ENCODE measurements at regions of chr11 and their contacts with region 1.

Region 1: GRCh38 chr11:63838678-63839507 is at the start of gene MARK2:
- DNase-seq: peak; percentile 96
- H3K4me3 ChIP-seq: peak within 1 kb of the TSS; percentile 59 to 86 (median 86)
- H3K27ac ChIP-seq: peak within 1 kb of the TSS; percentile 58
- H3K4me1 ChIP-seq: peaks cover 31% of the 10 kb centered on the region
- H3K27me3 ChIP-seq: no peaks in the 10 kb centered on the region
- CTCF ChIP-seq: no peak
- total RNA-seq, gene MARK2: 26.7 to 64.4 TPM

Region 2: GRCh38 chr11:63710476-63711217 is 128.2 kb before region 1 on chr11:
- CTCF ChIA-PET with region 1: no interaction called
- dilution Hi-C with region 1: no loop called
- in situ Hi-C with region 1: no loop called
- intact Hi-C with region 1: no loop called
- DNase-seq: no peak
- H3K4me3 ChIP-seq: no peak overlapping the region
- H3K27ac ChIP-seq: no peak overlapping the region
- H3K4me1 ChIP-seq: no peaks in the 10 kb centered on the region
- H3K27me3 ChIP-seq: no peaks in the 10 kb centered on the region
- CTCF ChIP-seq: no peak

Region 3: DNA sequence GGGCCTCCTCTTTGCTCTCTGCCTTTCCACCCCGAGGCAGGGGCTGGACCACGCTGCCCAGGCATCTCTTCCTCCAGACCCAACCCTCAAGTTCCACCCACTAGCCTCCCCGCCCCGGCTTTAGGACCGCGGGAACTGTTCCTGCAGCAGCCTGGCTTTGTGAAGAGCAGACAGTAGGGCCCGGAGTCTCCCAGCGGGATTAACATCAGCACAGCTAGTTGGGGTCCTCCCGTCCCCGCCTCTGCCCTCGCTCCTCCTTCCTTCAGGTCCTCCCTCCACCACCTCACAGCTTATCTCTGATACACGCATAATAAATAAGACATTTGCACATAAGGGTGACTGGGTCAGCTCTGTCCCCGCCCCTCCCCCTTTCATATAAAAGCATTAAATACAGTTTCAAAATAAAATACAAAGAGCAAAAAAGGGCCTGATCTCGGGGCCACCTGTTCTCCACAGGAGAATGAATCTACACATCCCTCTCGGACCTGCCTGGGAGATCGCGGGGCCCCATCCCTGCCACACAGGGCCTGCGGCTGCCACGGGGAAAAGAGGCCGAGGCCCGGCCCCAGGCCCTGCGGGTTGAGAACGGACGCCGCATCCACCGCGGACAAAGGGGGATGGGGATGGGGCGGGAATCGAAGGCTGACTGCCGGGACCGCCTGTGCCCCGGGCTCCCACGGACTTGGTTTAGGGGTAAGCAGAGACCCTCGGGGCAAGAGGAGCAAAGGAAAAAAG is 76.8 kb before region 1 on chr11:
- CTCF ChIA-PET with region 1: no interaction called
- dilution Hi-C with region 1: no loop called
- in situ Hi-C with region 1: no loop called
- intact Hi-C with region 1: no loop called
- DNase-seq: no peak
- H3K4me3 ChIP-seq: no peak overlapping the region
- H3K27ac ChIP-seq: no peak overlapping the region
- H3K4me1 ChIP-seq: peaks cover 3% of the 10 kb centered on the region
- H3K27me3 ChIP-seq: no peaks in the 10 kb centered on the region
- CTCF ChIP-seq: no peak

Region 4: GRCh38 chr11:63871962-63872799 is 33.3 kb after region 1 on chr11:
- CTCF ChIA-PET with region 1: no interaction called
- dilution Hi-C with region 1: no loop called
- in situ Hi-C with region 1: no loop called
- intact Hi-C with region 1: loop called (anchors 1 kb)
- DNase-seq: peak; percentile 93
- H3K4me3 ChIP-seq: no peak overlapping the region
- H3K27ac ChIP-seq: no peak overlapping the region
- H3K4me1 ChIP-seq: peaks cover 38% of the 10 kb centered on the region
- H3K27me3 ChIP-seq: no peaks in the 10 kb centered on the region
- CTCF ChIP-seq: peak in 1 of 2 donors; percentile 49

Region 5: GRCh38 chr11:63896071-63896470 is 57.2 kb after region 1 on chr11:
- CTCF ChIA-PET with region 1: no interaction called
- dilution Hi-C with region 1: loop called (anchors 5 kb)
- in situ Hi-C with region 1: no loop called
- intact Hi-C with region 1: loop called (anchors 2 kb)
- DNase-seq: no peak
- H3K4me3 ChIP-seq: no peak overlapping the region
- H3K27ac ChIP-seq: no peak overlapping the region
- H3K4me1 ChIP-seq: no peaks in the 10 kb centered on the region
- H3K27me3 ChIP-seq: no peaks in the 10 kb centered on the region
- CTCF ChIP-seq: no peak

Region 6: DNA sequence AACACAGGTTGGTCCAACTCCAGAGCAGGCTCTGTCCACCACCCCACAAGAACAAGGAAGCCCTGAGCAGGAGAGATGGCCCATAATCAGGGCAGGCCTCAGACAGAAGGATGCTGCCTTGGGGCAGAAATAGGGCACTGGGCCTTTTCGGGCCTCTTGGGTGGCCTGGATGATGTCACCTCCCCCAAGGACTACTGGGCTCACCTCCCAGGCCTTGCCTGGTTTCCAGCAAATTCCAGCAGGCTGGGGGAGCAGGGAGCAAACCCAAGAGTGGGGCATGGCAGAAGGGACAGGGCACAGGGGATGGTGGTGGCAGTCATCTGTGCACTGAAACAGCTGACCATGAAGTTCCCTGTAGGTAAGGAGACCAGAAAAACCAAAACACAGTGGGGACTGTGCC is 94.6 kb after region 1 on chr11:
- CTCF ChIA-PET with region 1: no interaction called
- dilution Hi-C with region 1: loop called (anchors 5 kb)
- in situ Hi-C with region 1: no loop called
- intact Hi-C with region 1: no loop called
- DNase-seq: no peak
- H3K4me3 ChIP-seq: no peak overlapping the region
- H3K27ac ChIP-seq: no peak overlapping the region
- H3K4me1 ChIP-seq: peaks cover 9% of the 10 kb centered on the region
- H3K27me3 ChIP-seq: no peaks in the 10 kb centered on the region
- CTCF ChIP-seq: no peak

Region 7: DNA sequence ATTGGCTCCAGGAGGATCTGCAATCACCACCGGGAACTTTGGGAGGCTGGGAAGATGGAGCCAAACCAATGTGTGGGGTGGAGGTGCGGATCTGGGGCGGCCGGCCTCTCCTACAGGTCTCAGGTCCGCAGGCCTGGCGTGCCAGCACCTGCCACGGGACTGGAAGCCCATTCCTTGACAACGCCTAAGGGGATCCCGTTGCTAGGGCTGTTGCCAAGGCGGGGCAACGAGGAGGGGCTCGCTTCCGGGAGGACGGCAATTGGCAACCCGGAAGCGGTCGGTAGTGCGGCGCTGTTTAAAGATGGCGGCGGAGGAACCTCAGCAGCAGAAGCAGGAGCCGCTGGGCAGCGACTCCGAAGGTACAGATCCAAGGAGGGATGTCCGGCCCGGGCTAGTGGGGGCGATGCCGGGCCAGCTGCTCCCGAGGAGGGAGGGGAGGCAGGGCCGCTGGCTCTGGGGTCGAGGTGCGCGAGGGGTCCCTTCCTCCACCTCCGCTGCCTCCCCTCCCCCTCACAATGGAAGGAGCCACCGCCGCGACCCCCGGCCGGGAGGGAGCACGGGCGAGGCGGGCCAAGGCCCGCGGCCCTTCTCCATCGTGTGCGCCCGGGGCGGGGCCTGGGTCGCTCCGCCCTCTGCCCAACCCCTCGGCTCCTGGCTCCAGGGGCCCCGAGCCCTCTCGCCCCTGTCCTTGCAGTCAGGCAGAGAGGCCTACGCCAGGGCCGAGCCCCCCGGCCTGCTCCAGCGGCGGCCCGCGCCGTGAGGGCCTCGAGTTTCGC is 147.5 kb after region 1 on chr11 and contains the start of gene OTUB1:
- CTCF ChIA-PET with region 1: no interaction called
- dilution Hi-C with region 1: no loop called
- in situ Hi-C with region 1: loop called in 1 of 2 experiments (anchors 10 kb)
- intact Hi-C with region 1: loop called (anchors 1 kb)
- DNase-seq: peak; percentile 97
- H3K4me3 ChIP-seq: peak within 1 kb of the TSS; percentile 83 to 99 (median 89)
- H3K27ac ChIP-seq: peak within 1 kb of the TSS; percentile 76
- H3K4me1 ChIP-seq: peaks cover 20% of the 10 kb centered on the region
- H3K27me3 ChIP-seq: no peaks in the 10 kb centered on the region
- CTCF ChIP-seq: no peak
- total RNA-seq, gene OTUB1: 48.0 to 101 TPM

Region 8: GRCh38 chr11:64152841-64153691 is 314.2 kb after region 1 on chr11:
- CTCF ChIA-PET with region 1: no interaction called
- dilution Hi-C with region 1: no loop called
- in situ Hi-C with region 1: loop called (anchors 10 kb)
- intact Hi-C with region 1: loop called (anchors 1 kb)
- DNase-seq: peak; percentile 29
- H3K4me3 ChIP-seq: peak overlapping the region in 2 of 3 experiments; percentile 7 to 17
- H3K27ac ChIP-seq: no peak overlapping the region
- H3K4me1 ChIP-seq: peaks cover 4% of the 10 kb centered on the region
- H3K27me3 ChIP-seq: no peaks in the 10 kb centered on the region
- CTCF ChIP-seq: peak; percentile 87 to 99

Measured in mammary epithelial cell (primary cell).